ENCODE measurements at regions of chr13 and their contacts with region 1.

Region 1: GRCh38 chr13:106536244-106537034 is 977 bp upstream of the EFNB2 start:
- DNase-seq: peak; percentile 74 to 95 (median 87)
- ATAC-seq: peak; percentile 46
- H3K4me3 ChIP-seq: peak overlapping the region; percentile 91
- H3K4me3 Mint-ChIP-seq: peak overlapping the region; percentile 97
- H3K27ac ChIP-seq: no peak overlapping the region
- H3K27ac Mint-ChIP-seq: peak overlapping the region; percentile 40
- H3K4me1 ChIP-seq: peaks cover 33% of the 10 kb centered on the region
- H3K4me1 Mint-ChIP-seq: peaks cover 29% of the 10 kb centered on the region
- H3K27me3 ChIP-seq: peaks cover 22 to 32% of the 10 kb centered on the region in 2 experiments
- H3K27me3 Mint-ChIP-seq: peaks cover 36% of the 10 kb centered on the region
- CTCF ChIP-seq: peak; percentile 98

Region 2: DNA sequence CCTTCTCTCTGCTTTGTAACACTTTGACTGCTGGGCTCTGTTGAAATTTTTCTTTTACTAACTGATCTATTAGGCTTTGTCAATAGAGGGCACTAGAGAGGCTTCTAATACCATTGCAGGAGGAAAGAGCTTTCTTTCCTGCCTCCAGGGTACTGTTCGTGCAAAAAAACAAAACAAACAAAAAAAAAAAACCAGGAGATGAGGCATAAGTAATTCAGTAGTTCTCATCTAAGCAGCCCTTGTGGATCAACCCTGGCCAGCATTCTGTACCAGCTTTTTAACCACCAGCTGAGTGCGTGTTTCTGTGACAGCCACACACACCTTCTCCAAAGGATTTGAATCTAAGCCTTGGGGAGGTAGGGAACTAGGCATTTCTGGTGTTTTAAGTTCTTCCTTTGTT is 1762.7 kb before region 1 on chr13:
- CTCF ChIA-PET with region 1: no interaction called
- POLR2A ChIA-PET with region 1: no interaction called
- intact Hi-C with region 1: loop called (anchors 5 to 10 kb)
- DNase-seq: peak in 3 of 14 experiments; percentile 14 to 18 (median 16)
- ATAC-seq: no peak
- H3K4me3 ChIP-seq: no peak overlapping the region
- H3K4me3 Mint-ChIP-seq: no peak overlapping the region
- H3K27ac ChIP-seq: no peak overlapping the region
- H3K27ac Mint-ChIP-seq: no peak overlapping the region
- H3K4me1 ChIP-seq: no peaks in the 10 kb centered on the region
- H3K4me1 Mint-ChIP-seq: no peaks in the 10 kb centered on the region
- H3K27me3 ChIP-seq: no peaks in the 10 kb centered on the region
- H3K27me3 Mint-ChIP-seq: no peaks in the 10 kb centered on the region
- CTCF ChIP-seq: peak; percentile 57

Region 3: DNA sequence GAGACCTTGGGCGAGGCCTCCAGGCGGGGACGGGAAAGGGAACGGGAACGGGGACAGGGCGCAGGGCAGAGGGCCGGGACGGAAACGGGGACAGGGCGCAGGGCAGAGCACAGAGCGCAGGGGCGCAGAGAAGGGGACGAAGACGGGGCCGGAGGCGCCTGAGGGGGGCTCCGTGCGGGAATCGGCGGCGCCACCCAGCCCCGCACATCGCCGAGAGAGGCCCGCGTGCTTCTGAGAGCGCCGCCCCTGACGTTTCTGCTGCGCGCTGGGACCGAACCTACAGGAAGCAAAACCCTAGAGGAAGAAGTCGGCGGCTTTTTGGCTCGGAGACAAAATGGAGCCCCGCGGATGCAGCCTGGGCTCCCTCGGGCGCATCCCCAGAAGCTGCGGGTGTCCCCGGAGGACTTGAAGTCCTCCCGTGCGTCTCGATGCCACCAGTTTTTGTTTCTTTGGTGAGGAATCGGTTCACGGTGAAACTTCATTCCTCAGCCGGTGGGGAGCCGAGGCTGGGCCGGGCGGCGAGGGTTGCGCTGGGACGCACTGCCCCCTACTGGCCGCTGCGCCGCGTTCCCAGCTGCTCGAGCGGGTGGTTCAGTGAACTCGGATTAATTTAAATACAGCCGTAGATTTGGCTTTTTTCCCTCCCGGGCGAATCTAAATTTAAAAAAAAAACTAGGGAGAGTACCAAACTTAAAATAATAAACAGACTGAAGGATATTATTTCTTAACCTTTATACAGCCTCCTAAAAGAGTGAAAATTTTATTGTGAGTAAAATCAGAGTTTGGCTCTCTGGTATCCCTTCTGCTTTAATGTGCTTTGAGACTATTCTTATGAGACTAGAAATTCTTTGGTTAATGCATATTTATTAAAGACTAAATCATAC is 381.5 kb after region 1 on chr13:
- CTCF ChIA-PET with region 1: interaction called, 5 read pairs
- POLR2A ChIA-PET with region 1: no interaction called
- intact Hi-C with region 1: loop called in 1 of 2 experiments (anchors 5 kb)
- DNase-seq: peak; percentile 23 to 79 (median 53)
- ATAC-seq: peak; percentile 78
- H3K4me3 ChIP-seq: peak overlapping the region; percentile 66
- H3K4me3 Mint-ChIP-seq: peak overlapping the region; percentile 79
- H3K27ac ChIP-seq: no peak overlapping the region
- H3K27ac Mint-ChIP-seq: no peak overlapping the region
- H3K4me1 ChIP-seq: peaks cover 7% of the 10 kb centered on the region
- H3K4me1 Mint-ChIP-seq: peaks cover 6% of the 10 kb centered on the region
- H3K27me3 ChIP-seq: peaks cover 8 to 14% of the 10 kb centered on the region in 2 experiments
- H3K27me3 Mint-ChIP-seq: peaks cover 47% of the 10 kb centered on the region
- CTCF ChIP-seq: peak; percentile 75

Measured in CD4-positive, alpha-beta T cell (primary cell).